ENCODE measurements at regions of chr6 and their contacts with region 1.

Region 1: DNA sequence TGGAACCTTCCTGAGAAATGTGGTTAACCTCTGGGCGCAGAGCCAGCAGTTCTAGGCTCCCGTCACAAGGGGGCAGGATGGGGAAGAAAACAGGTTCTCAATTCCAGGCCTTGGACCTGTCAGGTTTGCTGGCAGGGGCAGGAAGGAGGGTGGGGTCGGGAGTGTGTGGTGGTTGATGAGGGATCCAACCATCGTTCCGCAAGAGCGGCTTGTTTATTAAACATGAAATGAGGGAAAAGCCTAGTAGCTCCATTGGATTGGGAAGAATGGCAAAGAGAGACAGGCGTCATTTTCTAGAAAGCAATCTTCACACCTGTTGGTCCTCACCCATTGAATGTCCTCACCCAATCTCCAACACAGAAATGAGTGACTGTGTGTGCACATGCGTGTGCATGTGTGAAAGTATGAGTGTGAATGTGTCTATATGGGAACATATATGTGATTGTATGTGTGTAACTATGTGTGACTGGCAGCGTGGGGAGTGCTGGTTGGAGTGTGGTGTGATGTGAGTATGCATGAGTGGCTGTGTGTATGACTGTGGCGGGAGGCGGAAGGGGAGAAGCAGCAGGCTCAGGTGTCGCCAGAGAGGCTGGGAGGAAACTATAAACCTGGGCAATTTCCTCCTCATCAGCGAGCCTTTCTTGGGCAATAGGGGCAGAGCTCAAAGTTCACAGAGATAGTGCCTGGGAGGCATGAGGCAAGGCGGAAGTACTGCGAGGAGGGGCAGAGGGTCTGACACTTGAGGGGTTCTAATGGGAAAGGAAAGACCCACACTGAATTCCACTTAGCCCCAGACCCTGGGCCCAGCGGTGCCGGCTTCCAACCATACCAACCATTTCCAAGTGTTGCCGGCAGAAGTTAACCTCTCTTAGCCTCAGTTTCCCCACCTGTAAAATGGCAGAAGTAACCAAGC is 29.6 kb downstream of the SRSF3 start:
- DNase-seq: peak; percentile 82
- CTCF ChIP-seq: peak; percentile 90

Region 2: GRCh38 chr6:36682328-36683144 is 58.7 kb after region 1 on chr6:
- in situ Hi-C with region 1: loop called (anchors 10 kb)
- DNase-seq: peak; percentile 69
- CTCF ChIP-seq: no peak

Region 3: GRCh38 chr6:36720251-36721141 is 96.7 kb after region 1 on chr6:
- in situ Hi-C with region 1: no loop called
- DNase-seq: no peak
- CTCF ChIP-seq: no peak

Region 4: DNA sequence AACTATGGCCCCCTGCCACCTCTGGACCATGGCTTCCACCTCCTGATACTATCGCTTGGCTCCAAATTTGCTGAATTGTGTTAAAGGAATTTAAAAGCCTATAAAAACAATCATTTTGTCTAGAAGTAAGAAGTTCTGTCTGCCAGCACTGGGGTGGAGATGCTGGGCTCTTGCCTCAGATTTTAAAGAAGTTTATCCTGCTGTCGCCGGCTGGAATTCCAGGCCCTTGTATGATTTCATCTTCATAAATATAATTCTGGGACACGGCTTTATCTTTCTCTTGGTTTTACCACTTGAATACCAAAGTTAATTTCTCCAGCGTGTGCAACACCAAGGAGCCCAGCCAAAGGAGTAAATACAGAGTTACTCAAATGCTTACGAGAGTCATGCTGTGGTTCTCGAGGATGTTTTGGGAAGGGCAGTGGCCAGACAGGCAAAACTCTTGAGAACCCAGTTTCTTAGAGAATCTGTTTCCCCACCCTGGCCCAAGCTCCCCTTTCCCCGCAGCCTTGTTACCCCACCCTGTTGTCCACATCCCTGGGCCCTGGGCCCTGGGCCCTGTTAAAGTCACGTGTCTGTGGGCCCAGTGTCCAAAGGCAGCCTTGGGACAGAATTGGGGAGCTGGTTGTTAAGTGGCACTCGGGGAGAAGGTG is 293.9 kb after region 1 on chr6:
- in situ Hi-C with region 1: no loop called
- DNase-seq: no peak
- CTCF ChIP-seq: no peak